IMR-90 (cell line): ENCODE measurements at regions of chr1 and their contacts with region 1.

Region 1: DNA sequence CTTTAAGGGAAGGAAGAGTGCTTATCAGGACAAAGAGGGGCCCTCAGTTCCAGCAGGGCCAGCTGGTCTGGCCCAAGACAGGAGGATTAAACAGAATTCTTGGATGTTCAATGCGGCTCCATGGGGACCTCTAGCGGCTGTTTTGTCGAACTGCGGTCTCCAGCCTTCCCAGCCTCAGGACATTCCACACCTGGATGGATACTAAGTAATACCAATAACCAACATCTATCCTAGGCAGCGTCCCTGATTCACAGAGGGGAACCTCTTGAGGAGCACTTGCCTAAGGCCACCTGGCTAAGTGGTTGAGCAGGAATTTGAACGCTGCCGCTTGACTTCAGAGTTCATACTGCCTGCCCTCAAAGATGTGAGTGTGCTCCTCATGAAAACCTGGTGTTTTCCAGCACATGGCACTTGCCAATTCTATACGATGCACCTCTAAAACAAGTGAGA is 15.5 kb upstream of the CD247 start:
- DNase-seq: peak; percentile 50
- ATAC-seq: peak; percentile 98
- H3K4me3 ChIP-seq: no peak overlapping the region
- H3K27ac ChIP-seq: no peak overlapping the region
- H3K4me1 ChIP-seq: peaks cover 2% of the 10 kb centered on the region; the same call in 1 of the 2 replicates
- H3K27me3 ChIP-seq: peaks cover 20% of the 10 kb centered on the region
- CTCF ChIP-seq: peak; percentile 85
- POLR2A ChIP-seq: no peak
- RAD21 ChIP-seq: peak; percentile 80

Region 2: GRCh38 chr1:166902271-166902670 is 631.6 kb before region 1 on chr1:
- CTCF ChIA-PET with region 1: no interaction called
- POLR2A ChIA-PET with region 1: no interaction called
- dilution Hi-C with region 1: no loop called
- in situ Hi-C with region 1: no loop called
- intact Hi-C with region 1: loop called (anchors 10 kb)
- DNase-seq: peak; percentile 38
- ATAC-seq: peak; percentile 53; the same call in 1 of the 2 replicates
- H3K4me3 ChIP-seq: no peak overlapping the region
- H3K27ac ChIP-seq: no peak overlapping the region
- H3K4me1 ChIP-seq: peaks cover 3% of the 10 kb centered on the region; the same call in 1 of the 2 replicates
- H3K27me3 ChIP-seq: no peaks in the 10 kb centered on the region
- CTCF ChIP-seq: no peak
- POLR2A ChIP-seq: no peak
- RAD21 ChIP-seq: no peak

Region 3: DNA sequence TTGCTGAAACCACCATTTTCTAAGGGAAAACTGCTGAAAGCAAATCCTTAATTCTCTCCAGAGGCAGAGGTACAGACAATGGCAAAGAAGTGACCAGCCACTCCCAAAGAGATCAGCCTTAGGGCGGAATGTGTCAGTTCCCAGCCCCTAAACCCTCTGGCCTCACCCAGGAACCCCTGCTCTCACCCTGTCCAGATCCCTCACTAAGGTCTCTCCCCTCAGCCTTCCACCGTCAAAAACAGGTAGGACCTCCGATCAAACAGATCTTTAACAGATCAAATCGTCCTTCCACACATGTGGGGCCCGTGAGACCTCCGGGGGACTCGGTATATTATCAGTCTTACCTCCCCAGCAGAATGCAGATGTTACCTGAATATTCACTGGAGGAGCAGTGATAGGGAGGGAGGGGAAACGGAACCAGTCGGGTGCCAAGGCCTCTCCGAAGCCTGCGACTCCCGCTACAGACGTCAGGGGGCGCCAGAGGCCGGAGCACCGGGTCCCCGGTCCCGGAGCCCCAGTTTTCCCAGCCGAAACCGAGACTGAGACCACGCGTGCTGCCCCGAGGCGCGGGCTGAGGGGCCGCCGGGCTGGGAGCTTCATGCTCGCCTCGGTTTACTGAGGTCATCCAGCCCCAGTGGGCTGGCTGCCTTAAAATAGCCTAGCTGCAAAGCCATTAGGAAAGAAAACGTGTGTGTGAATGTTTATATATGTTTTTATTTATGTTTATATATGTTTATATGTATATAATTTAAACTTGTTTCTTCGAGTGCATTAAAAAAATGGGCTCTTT is 467.3 kb before region 1 on chr1:
- CTCF ChIA-PET with region 1: interaction called, 3 read pairs
- POLR2A ChIA-PET with region 1: no interaction called
- dilution Hi-C with region 1: no loop called
- in situ Hi-C with region 1: loop called (anchors 10 kb)
- intact Hi-C with region 1: loop called (anchors 1 kb)
- DNase-seq: peak; percentile 15
- ATAC-seq: peak; percentile 98
- H3K4me3 ChIP-seq: peak overlapping the region; percentile 23; the same call in 1 of the 2 replicates
- H3K27ac ChIP-seq: no peak overlapping the region
- H3K4me1 ChIP-seq: no peaks in the 10 kb centered on the region
- H3K27me3 ChIP-seq: peaks cover 15% of the 10 kb centered on the region
- CTCF ChIP-seq: peak; percentile 91
- POLR2A ChIP-seq: no peak
- RAD21 ChIP-seq: peak; percentile 92

Region 4: DNA sequence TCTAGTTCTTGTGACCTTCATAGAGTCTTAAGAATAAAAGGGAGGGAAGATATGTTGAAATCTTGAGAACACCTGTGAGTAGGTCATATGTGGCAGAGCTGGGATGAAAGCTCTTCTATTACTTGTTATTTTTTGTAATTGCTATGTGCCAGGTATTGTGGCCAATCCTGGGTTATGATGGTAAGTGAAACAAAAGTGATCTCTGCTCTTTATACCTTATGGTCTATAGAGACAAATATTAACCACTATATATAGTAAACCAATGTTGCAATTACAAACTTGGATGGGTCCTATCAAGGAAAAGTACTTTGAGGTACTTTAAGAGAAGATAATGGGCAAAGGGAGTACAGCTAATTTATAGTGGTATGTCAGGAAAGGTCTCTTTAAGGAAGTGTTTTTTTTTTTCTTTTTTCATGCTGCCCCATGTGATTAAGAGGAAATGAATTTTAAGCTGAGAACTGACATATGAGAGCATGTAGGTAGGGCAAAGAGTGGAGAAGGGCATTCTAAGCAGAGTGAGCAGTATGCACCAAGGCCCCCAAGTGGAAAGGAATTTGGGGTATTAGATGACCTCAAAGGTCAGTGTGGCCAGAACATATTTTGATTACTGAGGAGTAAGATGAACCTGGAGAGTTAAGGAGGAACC is 269.9 kb before region 1 on chr1:
- CTCF ChIA-PET with region 1: no interaction called
- POLR2A ChIA-PET with region 1: no interaction called
- dilution Hi-C with region 1: no loop called
- in situ Hi-C with region 1: loop called (anchors 10 kb)
- intact Hi-C with region 1: loop called (anchors 2 kb)
- DNase-seq: no peak
- ATAC-seq: no peak
- H3K4me3 ChIP-seq: no peak overlapping the region
- H3K27ac ChIP-seq: no peak overlapping the region
- H3K4me1 ChIP-seq: peaks cover under 1% of the 10 kb centered on the region; the same call in 1 of the 2 replicates
- H3K27me3 ChIP-seq: no peaks in the 10 kb centered on the region
- CTCF ChIP-seq: no peak
- POLR2A ChIP-seq: no peak
- RAD21 ChIP-seq: no peak

Region 5: DNA sequence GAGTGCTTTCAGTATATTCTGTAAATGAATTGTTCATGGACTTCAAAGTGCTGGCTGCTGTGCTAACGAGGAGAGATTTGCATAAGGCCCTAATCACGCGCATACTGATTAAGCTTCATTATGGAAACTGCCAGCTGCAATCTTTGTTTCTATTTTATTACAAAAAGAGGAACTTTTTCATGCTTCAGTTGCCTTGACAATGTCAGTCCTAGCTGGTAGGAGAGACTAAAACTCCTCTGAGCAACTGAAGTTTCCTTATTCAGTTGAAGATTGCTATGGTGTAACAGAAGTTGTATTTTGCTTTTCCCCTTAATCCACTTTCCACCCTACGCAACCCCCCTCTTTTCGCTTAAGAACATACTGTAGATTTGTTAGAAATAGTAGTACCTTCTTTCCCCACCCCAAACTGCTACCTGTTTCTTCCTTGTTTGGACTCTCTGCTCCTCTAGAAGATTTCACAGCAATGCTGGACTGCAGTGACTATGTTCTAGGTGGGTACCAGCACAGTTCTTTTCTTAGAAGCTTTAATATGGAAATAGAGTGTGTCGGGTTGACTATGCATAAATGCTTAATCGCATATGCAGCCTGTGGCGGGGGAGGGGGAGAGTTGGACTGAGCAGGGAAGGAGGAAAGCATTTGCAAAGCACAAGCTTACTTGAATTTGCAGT is 204.9 kb before region 1 on chr1:
- CTCF ChIA-PET with region 1: no interaction called
- POLR2A ChIA-PET with region 1: no interaction called
- dilution Hi-C with region 1: no loop called
- in situ Hi-C with region 1: no loop called
- intact Hi-C with region 1: no loop called
- DNase-seq: peak; percentile 0
- ATAC-seq: 0 out of 2 replicates have a peak, but pooled peaks have one; percentile 35
- H3K4me3 ChIP-seq: no peak overlapping the region
- H3K27ac ChIP-seq: no peak overlapping the region
- H3K4me1 ChIP-seq: no peaks in the 10 kb centered on the region
- H3K27me3 ChIP-seq: no peaks in the 10 kb centered on the region
- CTCF ChIP-seq: no peak
- POLR2A ChIP-seq: no peak
- RAD21 ChIP-seq: no peak

Region 6: GRCh38 chr1:167401260-167401873 is 132.5 kb before region 1 on chr1:
- CTCF ChIA-PET with region 1: no interaction called
- POLR2A ChIA-PET with region 1: no interaction called
- dilution Hi-C with region 1: no loop called
- in situ Hi-C with region 1: no loop called
- intact Hi-C with region 1: loop called (anchors 2 kb)
- DNase-seq: peak; percentile 55
- ATAC-seq: peak; percentile 83
- H3K4me3 ChIP-seq: no peak overlapping the region
- H3K27ac ChIP-seq: no peak overlapping the region
- H3K4me1 ChIP-seq: no peaks in the 10 kb centered on the region
- H3K27me3 ChIP-seq: no peaks in the 10 kb centered on the region
- CTCF ChIP-seq: peak; percentile 55
- POLR2A ChIP-seq: no peak
- RAD21 ChIP-seq: peak; percentile 60

Region 7: GRCh38 chr1:167442124-167442848 is 91.6 kb before region 1 on chr1:
- CTCF ChIA-PET with region 1: no interaction called
- POLR2A ChIA-PET with region 1: no interaction called
- dilution Hi-C with region 1: no loop called
- in situ Hi-C with region 1: no loop called
- intact Hi-C with region 1: loop called (anchors 2 kb)
- DNase-seq: peak; percentile 55
- ATAC-seq: peak; percentile 94
- H3K4me3 ChIP-seq: no peak overlapping the region
- H3K27ac ChIP-seq: no peak overlapping the region
- H3K4me1 ChIP-seq: no peaks in the 10 kb centered on the region
- H3K27me3 ChIP-seq: peaks cover 36% of the 10 kb centered on the region
- CTCF ChIP-seq: peak; percentile 86
- POLR2A ChIP-seq: no peak
- RAD21 ChIP-seq: peak; percentile 86